PC-9 (cell line): ENCODE measurements at regions of chr9 and their contacts with region 1.

Region 1: GRCh38 chr9:131969469-131969989 is 110.1 kb downstream of the MED27 start:
- DNase-seq: no peak
- H3K4me3 ChIP-seq: no peak overlapping the region
- H3K27ac ChIP-seq: no peak overlapping the region
- H3K4me1 ChIP-seq: no peaks in the 10 kb centered on the region
- H3K27me3 ChIP-seq: no peaks in the 10 kb centered on the region
- CTCF ChIP-seq: no peak

Region 2: DNA sequence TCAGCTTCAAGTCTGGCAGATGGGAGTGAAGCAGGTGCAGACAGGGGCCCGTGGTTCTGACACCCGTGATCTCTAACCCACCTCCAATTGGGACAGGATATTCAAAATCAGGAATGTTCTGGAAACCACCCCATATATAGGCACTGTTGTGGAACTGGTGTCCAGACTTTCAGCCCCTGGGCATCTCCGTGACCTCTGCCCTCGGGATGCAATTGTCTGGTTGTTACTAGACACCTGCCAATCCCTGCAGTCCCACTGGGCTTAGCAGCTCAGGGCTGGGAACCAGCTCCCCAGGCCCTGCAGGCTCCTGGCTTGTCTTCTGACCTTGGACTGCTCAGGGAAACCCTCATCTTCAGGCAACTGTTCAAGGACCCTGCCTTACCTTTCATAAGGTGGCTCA is 231.2 kb after region 1 on chr9:
- CTCF ChIA-PET with region 1: interaction called, 10 read pairs
- POLR2A ChIA-PET with region 1: no interaction called
- intact Hi-C with region 1: no loop called
- DNase-seq: no peak
- H3K4me3 ChIP-seq: no peak overlapping the region
- H3K27ac ChIP-seq: no peak overlapping the region
- H3K4me1 ChIP-seq: no peaks in the 10 kb centered on the region
- H3K27me3 ChIP-seq: peaks cover 90% of the 10 kb centered on the region
- CTCF ChIP-seq: no peak